Panc1 (cell line): ENCODE measurements at regions of chr12 and their contacts with region 1.

Region 1: GRCh38 chr12:111322336-111323250 is 46.3 kb downstream of the PHETA1 start:
- DNase-seq: no peak
- ATAC-seq: peak; percentile 47
- H3K4me3 ChIP-seq: no peak overlapping the region
- H3K27ac ChIP-seq: no peak overlapping the region
- H3K4me1 ChIP-seq: 0 out of 2 replicates have a peak, but pooled peaks cover 3% of the 10 kb centered on the region
- H3K27me3 ChIP-seq: no peaks in the 10 kb centered on the region
- CTCF ChIP-seq: no peak

Region 2: DNA sequence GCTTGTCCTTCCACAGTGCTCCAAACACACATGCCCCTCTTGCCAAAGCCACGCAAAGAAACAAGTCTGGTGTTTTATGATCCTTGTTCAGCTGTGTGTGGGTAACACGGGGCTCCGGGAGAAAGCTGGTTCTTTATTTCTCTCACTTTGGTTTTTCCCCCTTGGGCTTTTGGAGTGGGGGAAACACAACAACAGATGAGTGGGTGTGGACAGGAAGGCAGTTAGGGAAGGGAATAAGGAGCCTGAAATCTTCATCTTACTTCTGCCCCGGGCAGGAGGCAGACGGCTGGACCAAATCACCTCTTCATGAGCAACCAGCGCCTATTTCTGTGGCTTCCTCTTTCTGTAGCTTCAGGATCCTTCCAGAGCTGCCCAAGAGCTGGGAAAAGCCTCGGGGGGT is 172.2 kb before region 1 on chr12:
- CTCF ChIA-PET with region 1: no interaction called
- POLR2A ChIA-PET with region 1: interaction called, 13 read pairs
- in situ Hi-C with region 1: no loop called
- intact Hi-C with region 1: no loop called
- DNase-seq: no peak
- ATAC-seq: no peak
- H3K4me3 ChIP-seq: no peak overlapping the region
- H3K27ac ChIP-seq: no peak overlapping the region
- H3K4me1 ChIP-seq: no peaks in the 10 kb centered on the region
- H3K27me3 ChIP-seq: peaks cover 4% of the 10 kb centered on the region; the same call in 1 of the 2 replicates
- CTCF ChIP-seq: no peak